GM10248 (cell line): ENCODE measurements at regions of chr2 and their contacts with region 1.

Region 1: DNA sequence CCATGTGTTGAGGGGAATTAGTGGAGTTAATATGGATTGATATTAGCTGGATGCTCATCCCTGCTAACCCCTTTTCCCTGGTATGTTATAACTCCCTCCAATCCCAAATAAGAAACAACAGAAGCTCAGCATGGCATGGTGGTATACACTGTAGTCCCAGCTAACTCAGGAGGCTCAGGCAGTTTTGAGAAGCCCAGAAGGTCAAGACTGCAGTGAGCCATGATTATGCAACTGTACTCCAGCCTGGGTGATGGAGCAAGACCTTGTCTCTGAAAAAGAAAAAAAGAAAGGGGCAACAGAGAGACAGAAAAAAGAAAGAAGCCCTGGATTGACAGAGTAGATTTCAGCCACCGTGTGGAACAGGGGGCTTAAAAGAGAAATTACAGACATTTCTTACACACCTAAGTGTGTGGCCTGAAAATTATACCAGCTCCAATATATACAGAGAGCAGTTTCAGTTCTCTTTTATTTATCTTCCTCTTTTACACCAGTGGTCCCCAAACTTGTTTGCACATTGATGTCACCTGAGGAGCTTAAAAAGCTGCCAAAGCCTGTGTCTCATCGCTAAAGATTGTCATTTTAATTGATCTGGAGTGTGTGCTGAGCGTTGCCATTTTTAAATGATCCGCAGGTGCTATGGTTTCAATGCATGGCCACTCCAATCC is 203.6 kb downstream of the UBE2E3 start:
- DNase-seq: peak; percentile 33
- CTCF ChIP-seq: no peak

Region 2: DNA sequence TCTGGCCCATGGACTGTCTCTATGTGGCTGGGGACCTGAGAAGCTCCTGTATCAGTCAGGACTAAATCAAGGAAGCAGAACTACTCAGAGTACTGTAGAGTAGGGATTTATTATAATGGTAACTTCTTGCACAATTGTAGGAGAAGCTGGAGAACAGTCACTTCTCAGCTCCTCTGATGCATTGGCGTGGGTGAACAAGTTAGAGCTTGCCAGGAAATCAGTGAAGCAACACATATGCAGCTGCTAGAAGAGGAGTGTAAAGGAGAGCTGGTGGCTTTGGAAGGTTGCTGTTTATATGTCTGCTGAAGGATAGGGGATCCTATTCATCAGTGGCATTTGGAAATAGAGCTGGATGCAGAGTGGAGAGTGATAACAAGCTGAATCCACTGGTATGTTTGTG is 961.4 kb before region 1 on chr2:
- CTCF ChIA-PET with region 1: no interaction called
- POLR2A ChIA-PET with region 1: no interaction called
- DNase-seq: no peak
- CTCF ChIP-seq: no peak

Region 3: GRCh38 chr2:181138816-181139215 is 45.2 kb before region 1 on chr2:
- CTCF ChIA-PET with region 1: no interaction called
- POLR2A ChIA-PET with region 1: no interaction called
- DNase-seq: no peak
- CTCF ChIP-seq: no peak

Region 4: GRCh38 chr2:181196401-181196800 is 12.4 kb after region 1 on chr2:
- CTCF ChIA-PET with region 1: interaction called, 13 read pairs
- POLR2A ChIA-PET with region 1: no interaction called
- DNase-seq: no peak
- CTCF ChIP-seq: no peak